Activated CD8-positive, alpha-beta memory T cell treated with anti-CD3 and anti-CD28 coated beads, Interleukin-2, amount 10 ng/mL, durations not matched to agents 7 days and 5 days (primary cell): ENCODE measurements at regions of chr1 and their contacts with region 1.

Region 1: GRCh38 chr1:100921109-100921706 is 25.3 kb downstream of the SLC30A7 start:
- DNase-seq: no peak
- ATAC-seq: no peak
- H3K4me3 Mint-ChIP-seq: no peak overlapping the region
- H3K27ac Mint-ChIP-seq: no peak overlapping the region
- H3K4me1 Mint-ChIP-seq: peaks cover 19% of the 10 kb centered on the region
- H3K27me3 Mint-ChIP-seq: no peaks in the 10 kb centered on the region

Region 2: GRCh38 chr1:100941098-100941527 is 19.9 kb after region 1 on chr1:
- CTCF ChIA-PET with region 1: no interaction called
- DNase-seq: peak; percentile 55
- ATAC-seq: peak; percentile 69
- H3K4me3 Mint-ChIP-seq: peak overlapping the region; percentile 65
- H3K27ac Mint-ChIP-seq: peak overlapping the region; percentile 97
- H3K4me1 Mint-ChIP-seq: peaks cover 25% of the 10 kb centered on the region
- H3K27me3 Mint-ChIP-seq: peaks cover 3% of the 10 kb centered on the region

Region 3: GRCh38 chr1:101247404-101248287 is 326.4 kb after region 1 on chr1:
- CTCF ChIA-PET with region 1: interaction called, 15 read pairs
- DNase-seq: no peak
- ATAC-seq: no peak
- H3K4me3 Mint-ChIP-seq: no peak overlapping the region
- H3K27ac Mint-ChIP-seq: no peak overlapping the region
- H3K4me1 Mint-ChIP-seq: peaks cover 23% of the 10 kb centered on the region
- H3K27me3 Mint-ChIP-seq: no peaks in the 10 kb centered on the region